ENCODE measurements at regions of chr19 and their contacts with region 1.

Region 1: DNA sequence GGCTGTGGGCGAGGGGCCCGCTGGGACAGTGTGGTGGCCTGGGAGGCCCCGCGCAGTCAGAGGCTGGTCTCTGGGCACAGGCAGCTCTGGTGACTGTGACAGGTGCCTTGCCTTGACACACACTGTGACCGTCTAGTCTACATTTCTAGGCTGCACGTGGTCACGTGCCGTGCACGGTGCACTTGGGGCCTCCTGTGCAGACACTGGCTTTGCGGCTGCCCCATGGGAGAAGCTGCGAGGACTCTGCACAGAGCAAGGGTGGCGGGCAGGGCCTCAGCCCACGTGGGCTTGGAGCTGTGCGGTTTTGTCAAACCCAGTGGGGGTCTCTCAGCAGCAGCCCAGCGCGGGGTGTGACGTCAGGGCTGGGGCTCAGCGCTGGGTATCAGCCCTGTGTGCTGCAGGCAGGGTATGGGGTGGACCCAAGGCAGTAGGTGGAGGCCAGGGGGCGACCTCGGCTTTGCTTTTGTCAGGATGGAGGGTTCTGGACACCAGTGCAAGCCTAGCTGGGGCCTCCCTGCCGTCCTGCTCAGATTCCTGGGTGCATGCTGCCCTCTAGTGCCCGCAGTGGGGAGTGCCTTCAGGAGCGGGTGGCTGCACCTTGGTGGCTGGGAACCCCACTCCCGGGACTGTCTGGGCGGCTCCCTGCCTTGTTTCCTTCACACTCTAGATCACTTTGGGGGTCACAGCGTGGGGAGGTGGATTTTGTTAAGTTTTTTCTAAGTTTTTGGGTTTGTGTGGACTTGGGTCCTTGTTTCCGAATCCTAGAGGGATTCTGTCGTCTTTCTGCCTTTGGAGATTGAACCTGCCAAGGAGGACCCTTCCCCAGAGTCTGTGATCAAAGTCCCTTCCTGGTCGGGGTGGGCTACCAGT is 62.6 kb downstream of the KDM4B start:
- DNase-seq: peak; percentile 89
- ATAC-seq: peak; percentile 94
- H3K4me3 Mint-ChIP-seq: no peak overlapping the region
- H3K27ac Mint-ChIP-seq: no peak overlapping the region
- H3K4me1 Mint-ChIP-seq: peaks cover 8% of the 10 kb centered on the region
- H3K27me3 Mint-ChIP-seq: no peaks in the 10 kb centered on the region

Region 2: DNA sequence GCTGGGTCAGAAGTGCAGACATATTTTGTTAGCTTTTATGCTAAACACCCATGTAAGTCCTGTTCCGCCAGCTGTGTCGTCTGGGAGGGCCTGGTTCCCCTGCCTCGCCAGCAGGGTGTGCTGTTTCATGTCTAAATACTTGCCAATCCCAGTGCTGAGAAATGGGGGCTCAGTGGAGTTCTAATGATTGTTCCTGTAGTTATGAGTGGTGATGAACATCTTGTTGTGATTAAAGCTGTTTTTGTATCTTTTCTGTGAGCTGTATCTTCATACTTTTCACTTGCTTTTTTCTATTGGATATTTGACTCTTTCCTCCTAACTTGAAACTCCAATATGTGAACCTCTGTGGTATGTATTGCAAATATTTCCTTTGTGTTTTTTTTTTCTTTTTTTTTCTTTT is 29.9 kb before region 1 on chr19:
- CTCF ChIA-PET with region 1: interaction called, 19 read pairs
- POLR2A ChIA-PET with region 1: interaction called, 9 read pairs
- intact Hi-C with region 1: loop called (anchors 1 to 2 kb)
- DNase-seq: peak; percentile 66
- ATAC-seq: peak; percentile 80
- H3K4me3 Mint-ChIP-seq: no peak overlapping the region
- H3K27ac Mint-ChIP-seq: no peak overlapping the region
- H3K4me1 Mint-ChIP-seq: peaks cover 5% of the 10 kb centered on the region
- H3K27me3 Mint-ChIP-seq: no peaks in the 10 kb centered on the region